WTC11 (cell line): ENCODE measurements at regions of chr9 and their contacts with region 1.

Region 1: GRCh38 chr9:110217656-110218099 is 9.7 kb upstream of the C9orf152 start:
- DNase-seq: no peak
- ATAC-seq: no peak
- H3K4me3 Mint-ChIP-seq: no peak overlapping the region
- H3K27ac Mint-ChIP-seq: peak overlapping the region; percentile 76
- H3K4me1 Mint-ChIP-seq: no peaks in the 10 kb centered on the region
- H3K27me3 Mint-ChIP-seq: no peaks in the 10 kb centered on the region
- CTCF ChIP-seq: peak; percentile 65; the same call in 1 of the 2 replicates

Region 2: DNA sequence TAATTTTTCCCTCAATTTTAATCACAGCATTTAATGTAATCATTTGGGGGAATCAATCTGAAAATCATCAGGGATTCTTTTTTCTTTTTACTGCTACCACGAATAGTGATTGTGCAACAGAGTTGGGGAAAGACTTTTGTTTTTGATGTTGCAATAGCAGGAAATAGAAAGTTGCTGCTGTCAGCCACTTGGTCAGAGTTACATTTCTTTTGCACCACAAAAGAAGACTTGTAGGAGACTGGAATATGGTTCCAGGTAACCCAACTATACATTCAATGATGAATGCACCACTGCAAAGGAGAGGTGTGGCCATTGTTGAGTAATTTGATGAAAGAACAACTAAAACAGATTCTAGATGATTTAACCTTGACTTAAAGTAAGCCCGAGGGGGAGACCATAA is 484.0 kb before region 1 on chr9:
- CTCF ChIA-PET with region 1: no interaction called
- POLR2A ChIA-PET with region 1: no interaction called
- DNase-seq: no peak
- ATAC-seq: no peak
- H3K4me3 Mint-ChIP-seq: no peak overlapping the region
- H3K27ac Mint-ChIP-seq: no peak overlapping the region
- H3K4me1 Mint-ChIP-seq: peaks cover 13% of the 10 kb centered on the region
- H3K27me3 Mint-ChIP-seq: no peaks in the 10 kb centered on the region
- CTCF ChIP-seq: no peak

Region 3: GRCh38 chr9:110183208-110184145 is 34.2 kb before region 1 on chr9:
- CTCF ChIA-PET with region 1: interaction called, 39 read pairs
- POLR2A ChIA-PET with region 1: no interaction called
- DNase-seq: peak; percentile 71
- ATAC-seq: peak; percentile 81
- H3K4me3 Mint-ChIP-seq: no peak overlapping the region
- H3K27ac Mint-ChIP-seq: no peak overlapping the region
- H3K4me1 Mint-ChIP-seq: peaks cover 11% of the 10 kb centered on the region
- H3K27me3 Mint-ChIP-seq: no peaks in the 10 kb centered on the region; the same call in 1 of the 2 replicates
- CTCF ChIP-seq: peak; percentile 69

Region 4: GRCh38 chr9:110228960-110229359 is 11.3 kb after region 1 on chr9:
- CTCF ChIA-PET with region 1: interaction called, 10 read pairs
- POLR2A ChIA-PET with region 1: no interaction called
- DNase-seq: no peak
- ATAC-seq: peak; percentile 43; the same call in 1 of the 2 replicates
- H3K4me3 Mint-ChIP-seq: no peak overlapping the region
- H3K27ac Mint-ChIP-seq: no peak overlapping the region
- H3K4me1 Mint-ChIP-seq: peaks cover 17% of the 10 kb centered on the region
- H3K27me3 Mint-ChIP-seq: 0 out of 2 replicates have a peak, but pooled peaks cover 3% of the 10 kb centered on the region
- CTCF ChIP-seq: no peak